AG04449 (cell line): ENCODE measurements at regions of chr15 and their contacts with region 1.

Region 1: GRCh38 chr15:85296615-85297402 is 83.6 kb upstream of the AKAP13 start:
- DNase-seq: no peak
- H3K4me3 ChIP-seq: peak overlapping the region; percentile 46
- CTCF ChIP-seq: peak; percentile 73

Region 2: DNA sequence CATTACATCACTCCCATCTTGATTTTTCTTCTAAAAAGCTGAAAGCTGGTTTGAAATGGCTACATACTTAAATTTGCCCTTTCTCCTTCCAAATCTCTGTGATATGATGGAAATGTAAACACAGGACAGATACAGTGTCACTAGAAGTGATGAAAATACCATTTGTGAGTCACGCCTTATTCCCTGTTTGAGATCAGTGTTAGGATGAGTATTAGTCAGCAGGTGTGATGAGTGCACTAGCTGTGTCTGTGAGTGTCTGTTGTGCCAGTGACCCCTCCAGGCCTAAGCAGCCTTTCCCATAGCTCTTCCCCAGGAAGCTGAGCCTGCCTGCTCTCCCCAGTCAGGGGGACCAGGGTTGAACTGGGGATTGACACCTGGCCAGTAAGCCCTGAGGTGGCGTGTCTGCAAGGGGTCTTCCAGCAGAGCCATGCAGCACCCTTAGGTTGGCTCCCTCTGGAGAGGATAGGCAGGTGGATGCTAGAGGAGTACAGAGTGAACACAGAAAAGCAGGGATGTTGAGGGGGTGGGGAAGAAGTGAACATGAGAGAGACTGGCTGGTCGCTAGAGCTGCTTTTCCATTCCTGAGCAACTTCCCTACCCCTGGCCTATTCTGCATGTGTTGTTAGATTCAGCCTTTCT is 223.1 kb before region 1 on chr15:
- CTCF ChIA-PET with region 1: no interaction called
- POLR2A ChIA-PET with region 1: no interaction called
- DNase-seq: no peak
- H3K4me3 ChIP-seq: no peak overlapping the region
- CTCF ChIP-seq: no peak

Region 3: GRCh38 chr15:85276911-85277310 is 19.9 kb before region 1 on chr15:
- CTCF ChIA-PET with region 1: interaction called, 13 read pairs
- POLR2A ChIA-PET with region 1: no interaction called
- DNase-seq: no peak
- H3K4me3 ChIP-seq: no peak overlapping the region
- CTCF ChIP-seq: no peak

Region 4: GRCh38 chr15:85284497-85284896 is 12.3 kb before region 1 on chr15:
- CTCF ChIA-PET with region 1: interaction called, 11 read pairs
- POLR2A ChIA-PET with region 1: no interaction called
- DNase-seq: no peak
- H3K4me3 ChIP-seq: no peak overlapping the region
- CTCF ChIP-seq: no peak

Region 5: GRCh38 chr15:85312486-85312885 is 15.7 kb after region 1 on chr15:
- CTCF ChIA-PET with region 1: interaction called, 42 read pairs
- POLR2A ChIA-PET with region 1: no interaction called
- DNase-seq: no peak
- H3K4me3 ChIP-seq: no peak overlapping the region
- CTCF ChIP-seq: no peak

Region 6: DNA sequence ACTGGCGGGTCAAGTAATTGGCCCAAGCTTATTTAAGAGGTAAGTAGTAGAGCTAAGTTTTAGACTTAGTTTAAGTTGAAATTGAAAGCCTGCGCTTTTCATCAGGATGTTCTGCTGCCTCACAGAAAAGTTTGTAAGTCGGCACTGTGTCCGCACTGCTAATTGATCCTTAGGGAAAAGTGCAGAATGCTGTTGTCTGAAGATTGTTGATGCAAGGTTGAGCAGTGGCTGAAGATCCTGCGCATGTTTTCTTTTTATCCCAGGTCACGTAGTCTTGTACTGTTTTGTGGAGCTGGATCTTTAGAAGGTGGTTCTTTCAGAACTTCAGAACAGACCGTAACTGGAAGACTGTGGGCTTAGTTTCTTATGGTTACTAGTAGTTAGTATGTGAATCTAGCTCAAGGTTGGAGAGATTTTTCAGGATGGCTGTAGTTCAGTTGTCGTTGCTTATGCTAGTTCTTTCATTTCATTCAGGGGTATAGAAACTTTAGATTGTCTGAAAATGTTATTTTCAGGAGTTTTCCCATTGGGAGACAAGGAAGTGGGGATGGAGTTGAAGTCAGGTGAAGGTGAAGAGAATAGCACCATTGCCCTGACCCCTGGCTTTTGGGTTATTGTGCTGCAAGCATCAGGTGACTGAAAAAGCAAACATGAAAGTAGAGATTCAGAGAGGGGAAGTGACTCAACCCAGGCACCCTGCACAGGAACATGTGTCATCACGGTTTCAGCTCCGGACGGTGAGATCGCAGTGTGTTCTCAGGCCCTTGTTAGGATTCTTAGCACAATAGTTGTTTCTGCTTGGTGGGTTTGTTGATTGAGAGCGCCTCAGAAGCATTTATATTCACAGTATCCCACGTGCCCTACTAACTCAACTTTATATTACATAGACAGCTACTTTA is 116.4 kb after region 1 on chr15:
- CTCF ChIA-PET with region 1: interaction called, 98 read pairs
- POLR2A ChIA-PET with region 1: no interaction called
- DNase-seq: peak; percentile 40
- H3K4me3 ChIP-seq: no peak overlapping the region
- CTCF ChIP-seq: no peak